HEK293T (cell line): ENCODE measurements at regions of chr6 and their contacts with region 1.

Region 1: DNA sequence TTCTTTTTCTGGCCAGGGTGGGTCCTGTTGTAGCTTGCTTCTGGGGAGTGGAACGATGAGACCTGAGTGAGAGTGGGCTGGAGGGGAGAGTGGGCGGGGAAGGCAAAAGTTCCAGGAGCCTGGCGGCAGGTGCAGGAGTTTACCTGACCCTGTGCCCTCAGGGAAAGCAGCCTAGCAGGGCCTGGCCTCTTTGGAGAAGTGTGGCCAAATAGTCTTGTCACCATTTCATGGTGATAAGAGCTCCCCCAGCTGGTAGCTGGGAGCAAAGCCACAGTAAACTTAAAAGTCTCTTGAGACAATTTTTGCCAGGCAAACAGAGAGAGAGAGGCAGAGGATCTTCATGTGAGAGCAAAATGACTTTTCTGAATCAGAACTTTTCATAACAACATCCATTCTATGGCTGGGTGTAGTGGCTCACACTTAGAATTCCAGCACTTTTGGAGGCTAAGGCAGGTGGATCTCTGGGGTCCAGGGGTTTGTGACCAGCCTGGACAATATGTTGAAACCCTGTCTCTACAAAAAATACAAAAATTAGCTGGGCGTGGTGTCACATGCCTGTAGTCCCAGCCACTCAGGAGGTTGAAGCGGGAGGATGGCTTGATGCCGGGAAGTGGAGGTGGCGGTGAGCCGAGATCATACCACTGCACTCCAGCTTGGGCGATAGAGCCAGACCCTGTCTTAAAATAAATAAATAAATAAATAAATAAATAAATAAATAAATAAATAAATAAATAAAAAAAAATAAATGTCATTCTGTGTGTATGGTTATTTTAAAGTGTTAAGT is 161.8 kb upstream of the SCGN start:
- DNase-seq: peak; percentile 68

Region 2: DNA sequence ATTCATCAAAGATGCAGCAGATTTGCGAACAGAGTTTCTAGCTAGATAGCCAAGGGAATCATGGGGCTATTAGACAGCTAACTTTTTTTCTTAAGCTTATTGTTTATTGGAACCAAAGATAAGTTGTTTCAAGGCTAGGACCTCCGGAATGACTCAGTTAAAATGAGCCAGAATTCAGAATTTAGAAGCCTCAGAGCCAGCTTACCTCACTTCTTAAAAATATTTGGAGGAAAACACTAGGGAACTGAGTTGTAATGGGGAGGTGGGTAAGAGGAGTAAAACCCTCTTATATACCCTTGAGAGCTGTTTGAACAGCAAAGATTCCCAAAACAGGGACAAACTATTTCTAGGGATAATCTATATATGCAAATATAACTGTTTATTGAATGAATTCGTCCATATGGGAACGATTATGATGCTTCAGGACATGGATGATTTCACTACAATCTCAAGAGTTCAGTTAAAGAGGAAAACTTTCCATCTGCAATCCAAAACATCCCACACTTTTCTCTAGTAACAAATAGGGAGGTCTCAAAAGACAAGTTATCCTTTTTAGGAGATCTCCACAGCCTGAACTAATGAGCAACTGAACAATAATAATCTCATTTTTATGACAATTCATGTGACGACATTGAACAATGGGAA is 223.6 kb before region 1 on chr6:
- CTCF ChIA-PET with region 1: interaction called, 23 read pairs
- POLR2A ChIA-PET with region 1: no interaction called
- DNase-seq: no peak

Region 3: GRCh38 chr6:25346064-25346463 is 144.1 kb before region 1 on chr6:
- CTCF ChIA-PET with region 1: no interaction called
- POLR2A ChIA-PET with region 1: no interaction called
- DNase-seq: no peak

Region 4: DNA sequence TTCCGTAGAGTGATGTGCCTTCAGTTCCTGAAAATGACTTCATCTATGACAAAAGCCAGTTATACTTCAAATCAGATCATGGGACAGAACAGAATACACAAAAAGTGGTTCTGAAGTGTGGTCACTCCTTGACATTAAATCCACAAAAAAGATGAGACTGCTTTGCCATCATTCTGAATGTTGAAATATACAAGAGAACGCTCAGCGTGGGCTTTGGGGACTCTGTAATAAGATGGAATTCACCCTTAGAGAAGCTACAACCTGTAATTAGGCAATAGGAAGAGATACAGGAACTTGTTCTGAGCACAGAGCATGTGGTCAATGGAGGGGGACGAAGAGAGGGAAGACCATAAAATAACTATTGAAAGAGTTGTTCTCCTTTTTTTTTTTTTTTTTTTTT is 26.8 kb before region 1 on chr6:
- CTCF ChIA-PET with region 1: no interaction called
- POLR2A ChIA-PET with region 1: no interaction called
- DNase-seq: no peak

Region 5: DNA sequence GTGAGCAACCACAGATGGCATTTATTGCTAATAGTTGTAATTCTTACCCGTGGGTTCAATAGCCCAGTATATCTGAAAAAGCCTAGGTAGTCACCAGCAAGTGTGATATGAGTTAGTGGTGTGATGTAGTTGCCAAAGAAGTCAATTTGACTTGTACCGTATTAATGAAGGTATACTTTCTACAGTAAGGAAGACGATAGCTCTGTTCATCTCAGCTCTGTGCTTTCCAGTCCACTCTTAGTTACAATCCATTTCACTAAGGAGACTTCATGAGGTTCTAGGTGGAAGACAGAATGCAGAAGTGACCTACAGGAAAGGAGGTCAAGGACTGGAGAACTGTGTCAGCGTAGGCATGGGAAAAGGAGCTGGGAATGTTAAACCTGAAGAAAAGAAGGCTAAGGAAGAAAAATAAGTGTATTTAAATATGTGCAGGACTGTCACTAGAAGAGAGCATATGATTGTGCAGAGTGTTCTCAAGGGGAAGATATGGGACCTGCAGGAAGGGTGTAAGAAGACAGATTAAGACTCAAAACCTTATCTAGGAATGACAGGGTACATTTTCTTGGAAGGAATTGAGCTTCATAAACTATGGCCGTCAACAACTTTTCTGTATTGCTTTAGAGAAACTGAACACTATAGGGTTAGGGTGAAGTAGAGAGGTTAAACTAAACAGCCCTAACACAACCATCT is 44.9 kb after region 1 on chr6:
- CTCF ChIA-PET with region 1: no interaction called
- POLR2A ChIA-PET with region 1: no interaction called
- DNase-seq: no peak